ENCODE measurements at regions of chr7 and their contacts with region 1.

Region 1: DNA sequence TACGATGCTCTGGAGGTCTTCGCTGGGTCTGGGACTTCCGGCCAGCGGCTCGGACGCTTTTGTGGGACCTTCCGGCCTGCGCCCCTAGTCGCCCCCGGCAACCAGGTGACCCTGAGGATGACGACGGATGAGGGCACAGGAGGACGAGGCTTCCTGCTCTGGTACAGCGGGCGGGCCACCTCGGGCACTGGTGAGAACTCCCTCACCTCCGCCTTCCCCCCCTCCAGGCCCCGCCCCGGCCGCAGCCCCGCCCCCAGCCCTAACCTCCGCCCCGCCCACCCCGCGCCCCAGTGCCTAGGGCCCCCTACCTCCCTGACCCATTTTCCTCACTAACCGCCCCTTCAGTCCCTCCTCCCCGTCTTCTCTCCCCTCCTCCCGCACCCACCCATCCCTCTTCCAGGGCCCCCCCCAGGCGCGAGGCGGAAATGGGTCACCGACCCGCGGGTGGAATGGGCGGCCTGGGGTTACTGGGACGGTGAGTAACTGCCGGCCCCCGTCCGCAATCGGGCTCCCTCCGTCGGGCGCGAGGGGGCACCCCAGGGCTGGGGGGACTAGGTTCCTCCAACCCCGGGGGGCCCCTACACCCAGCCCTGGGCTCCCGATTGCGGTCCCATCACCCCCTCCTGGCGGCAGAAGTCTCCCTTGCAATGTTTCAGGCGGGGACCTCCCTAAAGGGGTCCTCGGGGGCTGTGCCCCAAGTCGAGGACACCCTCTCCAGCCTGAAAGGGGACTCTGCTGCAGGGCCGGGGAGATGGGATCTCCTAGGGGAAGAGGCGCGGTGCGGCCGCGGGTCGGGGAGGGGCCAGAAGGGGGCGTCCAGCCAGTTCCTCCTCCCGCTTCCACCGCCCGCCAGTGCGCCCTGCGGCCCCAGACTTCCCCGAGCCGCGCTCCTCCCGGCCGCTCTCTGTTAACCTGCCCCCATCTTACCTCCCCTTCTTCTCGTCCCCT is 2.1 kb downstream of the PCOLCE start:
- DNase-seq: peak; percentile 85
- ATAC-seq: peak; percentile 70
- H3K4me3 Mint-ChIP-seq: peak overlapping the region; percentile 78
- H3K27ac Mint-ChIP-seq: peak overlapping the region; percentile 82
- H3K4me1 Mint-ChIP-seq: peaks cover 15% of the 10 kb centered on the region
- H3K27me3 Mint-ChIP-seq: peaks cover 3% of the 10 kb centered on the region

Region 2: GRCh38 chr7:100626530-100627237 is 22.4 kb after region 1 on chr7:
- CTCF ChIA-PET with region 1: interaction called, 3 read pairs
- POLR2A ChIA-PET with region 1: no interaction called
- intact Hi-C with region 1: loop called in 1 of 2 experiments (anchors 1 kb)
- DNase-seq: peak; percentile 96
- ATAC-seq: peak; percentile 99
- H3K4me3 Mint-ChIP-seq: peak overlapping the region; percentile 71
- H3K27ac Mint-ChIP-seq: peak overlapping the region; percentile 47
- H3K4me1 Mint-ChIP-seq: peaks cover 13% of the 10 kb centered on the region
- H3K27me3 Mint-ChIP-seq: no peaks in the 10 kb centered on the region

Region 3: DNA sequence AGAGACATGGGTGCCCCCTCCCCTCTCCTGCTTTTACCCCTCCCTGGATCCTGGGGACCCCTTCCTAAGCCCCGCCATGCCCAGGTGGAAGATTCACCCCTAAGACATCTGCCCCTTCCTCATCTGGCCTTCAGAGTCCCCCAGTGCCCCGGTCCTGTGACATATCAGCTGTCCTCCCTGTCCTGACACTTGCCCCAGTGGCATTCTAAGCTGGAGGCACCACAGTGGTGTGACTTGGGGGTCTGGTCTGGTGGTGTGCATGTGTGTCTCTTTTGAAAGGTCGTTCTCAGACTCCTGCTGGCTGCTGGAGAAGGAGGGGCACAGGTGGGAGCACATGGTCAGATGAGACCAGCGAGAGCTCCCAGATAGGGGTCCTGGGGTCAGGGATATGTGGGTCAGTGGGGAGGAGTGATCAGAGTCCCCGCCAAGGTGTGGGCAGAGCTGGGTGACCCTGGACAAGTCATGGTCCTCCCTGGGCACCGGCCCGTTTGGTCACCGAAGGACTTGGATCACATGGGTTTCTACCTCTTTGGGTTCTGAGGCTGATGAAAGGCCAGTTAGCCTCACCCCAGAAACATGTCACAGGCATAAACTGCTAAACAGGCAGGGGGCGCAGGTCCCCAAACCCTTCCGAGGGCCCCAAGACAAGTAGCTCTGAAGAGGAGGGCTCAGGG is 37.7 kb after region 1 on chr7:
- CTCF ChIA-PET with region 1: no interaction called
- POLR2A ChIA-PET with region 1: no interaction called
- intact Hi-C with region 1: no loop called
- DNase-seq: no peak
- ATAC-seq: no peak
- H3K4me3 Mint-ChIP-seq: no peak overlapping the region
- H3K27ac Mint-ChIP-seq: no peak overlapping the region
- H3K4me1 Mint-ChIP-seq: no peaks in the 10 kb centered on the region
- H3K27me3 Mint-ChIP-seq: no peaks in the 10 kb centered on the region

Measured in activated CD4-positive, alpha-beta T cell treated with anti-CD3 and anti-CD28 coated beads for 36 hours (primary cell).